Cardiac septum (tissue), 1 donor: ENCODE measurements at regions of chr4 and their contacts with region 1.

Region 1: GRCh38 chr4:126306152-126306869 is 991.6 kb downstream of the FAT4 start:
- DNase-seq: no peak

Region 2: GRCh38 chr4:125483278-125483677 is 823.0 kb before region 1 on chr4:
- intact Hi-C with region 1: no loop called
- DNase-seq: no peak

Region 3: GRCh38 chr4:126242679-126243390 is 63.5 kb before region 1 on chr4:
- intact Hi-C with region 1: loop called (anchors 10 kb)
- DNase-seq: no peak

Region 4: GRCh38 chr4:126976850-126977632 is 670.7 kb after region 1 on chr4:
- intact Hi-C with region 1: no loop called
- DNase-seq: no peak